T-cell (primary cell): ENCODE measurements at regions of chr1 and their contacts with region 1.

Region 1: GRCh38 chr1:220089650-220090556 is at the start of gene BPNT1:
- DNase-seq: peak; percentile 91 to 99 (median 97)
- ATAC-seq: peak; percentile 65 to 80 (median 68)
- H3K4me3 ChIP-seq: peak within 1 kb of the TSS; percentile 80 to 95
- H3K4me3 Mint-ChIP-seq: peak within 1 kb of the TSS; percentile 88 to 97 (median 90)
- H3K27ac ChIP-seq: peak within 1 kb of the TSS; percentile 80
- H3K27ac Mint-ChIP-seq: peak within 1 kb of the TSS; percentile 89 to 90
- H3K4me1 ChIP-seq: peaks cover 18 to 26% of the 10 kb centered on the region in 2 experiments
- H3K4me1 Mint-ChIP-seq: peaks cover 13 to 34% (median 31%) of the 10 kb centered on the region in 3 donors
- H3K27me3 ChIP-seq: no peaks in the 10 kb centered on the region
- H3K27me3 Mint-ChIP-seq: no peaks in the 10 kb centered on the region
- total RNA-seq, gene BPNT1: 8.5 to 16.8 (median 14.3) TPM

Region 2: GRCh38 chr1:219566951-219567947 is 522.7 kb before region 1 on chr1:
- CTCF ChIA-PET with region 1: no interaction called
- POLR2A ChIA-PET with region 1: no interaction called
- DNase-seq: no peak
- ATAC-seq: no peak
- H3K4me3 ChIP-seq: no peak overlapping the region
- H3K4me3 Mint-ChIP-seq: no peak overlapping the region
- H3K27ac ChIP-seq: no peak overlapping the region
- H3K27ac Mint-ChIP-seq: no peak overlapping the region
- H3K4me1 ChIP-seq: no peaks in the 10 kb centered on the region
- H3K4me1 Mint-ChIP-seq: no peaks in the 10 kb centered on the region
- H3K27me3 ChIP-seq: no peaks in the 10 kb centered on the region
- H3K27me3 Mint-ChIP-seq: no peaks in the 10 kb centered on the region

Region 3: GRCh38 chr1:220005489-220005888 is 84.4 kb before region 1 on chr1:
- CTCF ChIA-PET with region 1: no interaction called
- POLR2A ChIA-PET with region 1: no interaction called
- DNase-seq: no peak
- ATAC-seq: no peak
- H3K4me3 ChIP-seq: no peak overlapping the region
- H3K4me3 Mint-ChIP-seq: no peak overlapping the region
- H3K27ac ChIP-seq: no peak overlapping the region
- H3K27ac Mint-ChIP-seq: no peak overlapping the region
- H3K4me1 ChIP-seq: no peaks in the 10 kb centered on the region
- H3K4me1 Mint-ChIP-seq: no peaks in the 10 kb centered on the region
- H3K27me3 ChIP-seq: no peaks in the 10 kb centered on the region
- H3K27me3 Mint-ChIP-seq: no peaks in the 10 kb centered on the region

Region 4: GRCh38 chr1:220046052-220046930 is 43.6 kb before region 1 on chr1 and contains the start of gene EPRS1:
- CTCF ChIA-PET with region 1: interaction called in 1 of 2 experiments, 10 read pairs
- POLR2A ChIA-PET with region 1: interaction called, 3 to 9 read pairs
- DNase-seq: peak; percentile 83 to 99 (median 94)
- ATAC-seq: peak; percentile 97 to 100 (median 99)
- H3K4me3 ChIP-seq: peak within 1 kb of the TSS; percentile 80 to 89
- H3K4me3 Mint-ChIP-seq: peak within 1 kb of the TSS; percentile 96 to 98 (median 96)
- H3K27ac ChIP-seq: peak within 1 kb of the TSS; percentile 79
- H3K27ac Mint-ChIP-seq: peak within 1 kb of the TSS; percentile 94 to 97
- H3K4me1 ChIP-seq: peaks cover 3 to 16% of the 10 kb centered on the region in 2 experiments
- H3K4me1 Mint-ChIP-seq: peaks cover 31 to 45% (median 40%) of the 10 kb centered on the region in 3 donors
- H3K27me3 ChIP-seq: no peaks in the 10 kb centered on the region
- H3K27me3 Mint-ChIP-seq: no peaks in the 10 kb centered on the region
- total RNA-seq, gene EPRS1: 48.3 to 91.9 (median 86.9) TPM